T-cell (primary cell): ENCODE measurements at regions of chr1 and their contacts with region 1.

Region 1: GRCh38 chr1:111197598-111198284 is 2.7 kb downstream of the DENND2D start:
- DNase-seq: peak in 28 of 35 experiments; percentile 46 to 86 (median 64)
- ATAC-seq: peak; percentile 26 to 63 (median 60)
- H3K4me3 ChIP-seq: peak overlapping the region; percentile 78 to 90
- H3K4me3 Mint-ChIP-seq: peak overlapping the region; percentile 98 to 99 (median 99)
- H3K27ac ChIP-seq: peak overlapping the region; percentile 76
- H3K27ac Mint-ChIP-seq: peak overlapping the region; percentile 95 to 99
- H3K4me1 ChIP-seq: peaks cover 62 to 78% of the 10 kb centered on the region in 2 experiments
- H3K4me1 Mint-ChIP-seq: peaks cover 78 to 87% (median 84%) of the 10 kb centered on the region in 3 donors
- H3K27me3 ChIP-seq: no peaks in the 10 kb centered on the region
- H3K27me3 Mint-ChIP-seq: no peaks in the 10 kb centered on the region

Region 2: DNA sequence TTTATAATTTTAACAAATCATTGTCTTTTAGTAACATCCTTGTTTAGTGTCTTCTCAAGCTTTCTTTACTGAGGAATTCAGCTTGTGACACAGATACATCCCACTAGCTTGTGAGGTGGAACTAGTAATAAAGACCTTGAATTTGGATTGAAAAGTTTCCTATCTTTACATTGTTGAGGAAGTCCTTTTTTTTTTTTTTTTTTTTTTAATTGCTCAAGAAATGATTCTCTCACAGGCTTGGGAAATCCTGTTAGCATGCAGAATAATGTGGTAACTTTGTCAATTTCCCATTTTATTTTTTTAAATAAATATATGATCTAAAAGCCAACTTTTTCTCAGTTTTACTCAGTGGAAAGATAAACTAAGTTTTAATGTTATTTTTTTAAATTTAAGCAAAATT is 13.1 kb before region 1 on chr1:
- CTCF ChIA-PET with region 1: interaction called in 1 of 2 experiments, 5 read pairs
- POLR2A ChIA-PET with region 1: interaction called in 1 of 2 experiments, 11 read pairs
- DNase-seq: no peak
- ATAC-seq: no peak
- H3K4me3 ChIP-seq: no peak overlapping the region
- H3K4me3 Mint-ChIP-seq: no peak overlapping the region
- H3K27ac ChIP-seq: no peak overlapping the region
- H3K27ac Mint-ChIP-seq: peak overlapping the region; percentile 75 to 81
- H3K4me1 ChIP-seq: peaks cover 13 to 22% of the 10 kb centered on the region in 2 experiments
- H3K4me1 Mint-ChIP-seq: peaks cover 84 to 92% (median 91%) of the 10 kb centered on the region in 3 donors
- H3K27me3 ChIP-seq: no peaks in the 10 kb centered on the region
- H3K27me3 Mint-ChIP-seq: no peaks in the 10 kb centered on the region

Region 3: DNA sequence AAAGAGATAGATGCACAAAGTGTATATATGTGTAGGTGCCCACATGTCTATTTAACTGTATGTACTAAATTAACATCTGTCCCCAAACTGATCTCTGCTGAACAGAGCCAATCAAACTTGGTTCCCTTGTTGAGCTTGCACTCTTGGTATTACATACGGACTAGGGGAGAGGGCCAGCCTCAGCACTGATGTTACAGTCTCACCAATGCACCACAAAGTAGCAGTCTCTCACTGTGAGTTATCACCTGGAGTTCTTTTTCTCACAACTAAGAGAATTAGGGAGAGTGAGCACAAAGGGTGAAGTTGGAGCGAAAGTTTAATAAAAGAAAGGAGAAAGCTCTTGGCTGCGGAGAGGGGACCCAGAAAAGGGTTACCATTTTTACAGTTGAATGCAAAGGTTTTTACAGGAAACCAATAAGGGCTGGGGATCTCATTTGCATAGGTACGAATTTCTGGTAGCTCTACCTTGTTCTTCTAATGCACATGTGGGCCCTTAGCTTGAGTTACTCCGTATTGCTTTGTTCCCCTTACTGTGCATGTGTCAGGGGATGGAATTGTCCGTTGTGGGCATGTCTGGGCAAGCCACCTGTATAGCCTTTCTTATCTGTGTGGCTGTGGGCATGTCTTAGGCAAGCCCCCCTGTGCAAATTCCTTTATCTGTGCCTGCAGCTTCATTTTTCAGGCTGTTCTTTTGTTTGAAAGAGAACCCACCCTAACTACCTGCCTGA is 16.5 kb after region 1 on chr1:
- CTCF ChIA-PET with region 1: interaction called in 1 of 2 experiments, 50 read pairs
- POLR2A ChIA-PET with region 1: interaction called, 7 to 17 read pairs
- DNase-seq: peak in 1 of 35 experiments; percentile 6
- ATAC-seq: no peak
- H3K4me3 ChIP-seq: no peak overlapping the region
- H3K4me3 Mint-ChIP-seq: peak overlapping the region; percentile 62 to 81 (median 63)
- H3K27ac ChIP-seq: peak overlapping the region; percentile 87
- H3K27ac Mint-ChIP-seq: peak overlapping the region; percentile 95 to 96
- H3K4me1 ChIP-seq: peaks cover 50 to 70% of the 10 kb centered on the region in 2 experiments
- H3K4me1 Mint-ChIP-seq: peaks cover 82 to 92% (median 88%) of the 10 kb centered on the region in 3 donors
- H3K27me3 ChIP-seq: no peaks in the 10 kb centered on the region
- H3K27me3 Mint-ChIP-seq: peaks cover 0 to 2% of the 10 kb centered on the region in 2 donors

Region 4: GRCh38 chr1:111222308-111223125 is 24.8 kb after region 1 on chr1:
- CTCF ChIA-PET with region 1: interaction called, 4 to 50 read pairs
- POLR2A ChIA-PET with region 1: interaction called, 4 to 9 read pairs
- DNase-seq: peak in 34 of 35 experiments; percentile 32 to 89 (median 66)
- ATAC-seq: peak; percentile 27 to 41 (median 34)
- H3K4me3 ChIP-seq: peak overlapping the region; percentile 37 to 39
- H3K4me3 Mint-ChIP-seq: peak overlapping the region; percentile 71 to 81 (median 73)
- H3K27ac ChIP-seq: peak overlapping the region; percentile 87
- H3K27ac Mint-ChIP-seq: peak overlapping the region; percentile 95 to 96
- H3K4me1 ChIP-seq: peaks cover 88 to 89% of the 10 kb centered on the region in 2 experiments
- H3K4me1 Mint-ChIP-seq: peaks cover 94 to 100% (median 94%) of the 10 kb centered on the region in 3 donors
- H3K27me3 ChIP-seq: no peaks in the 10 kb centered on the region
- H3K27me3 Mint-ChIP-seq: no peaks in the 10 kb centered on the region

Region 5: GRCh38 chr1:111334169-111334568 is 136.4 kb after region 1 on chr1:
- CTCF ChIA-PET with region 1: interaction called, 3 to 10 read pairs
- POLR2A ChIA-PET with region 1: no interaction called
- DNase-seq: peak in 32 of 35 experiments; percentile 31 to 83 (median 53)
- ATAC-seq: peak; percentile 68 to 84 (median 81)
- H3K4me3 ChIP-seq: no peak overlapping the region
- H3K4me3 Mint-ChIP-seq: no peak overlapping the region
- H3K27ac ChIP-seq: no peak overlapping the region
- H3K27ac Mint-ChIP-seq: peak overlapping the region; percentile 5 to 52
- H3K4me1 ChIP-seq: peaks cover 0 to 6% of the 10 kb centered on the region in 2 experiments
- H3K4me1 Mint-ChIP-seq: peaks cover 8 to 12% (median 11%) of the 10 kb centered on the region in 3 donors
- H3K27me3 ChIP-seq: no peaks in the 10 kb centered on the region
- H3K27me3 Mint-ChIP-seq: no peaks in the 10 kb centered on the region

Region 6: GRCh38 chr1:111399792-111400610 is 202.3 kb after region 1 on chr1:
- CTCF ChIA-PET with region 1: interaction called in 1 of 2 experiments, 10 read pairs
- POLR2A ChIA-PET with region 1: interaction called in 1 of 2 experiments, 3 read pairs
- DNase-seq: peak in 22 of 35 experiments; percentile 6 to 70 (median 24)
- ATAC-seq: no peak
- H3K4me3 ChIP-seq: no peak overlapping the region
- H3K4me3 Mint-ChIP-seq: no peak overlapping the region
- H3K27ac ChIP-seq: no peak overlapping the region
- H3K27ac Mint-ChIP-seq: peak overlapping the region in 1 of 2 donors; percentile 5
- H3K4me1 ChIP-seq: peaks cover 0 to 12% of the 10 kb centered on the region in 2 experiments
- H3K4me1 Mint-ChIP-seq: peaks cover 19 to 44% (median 24%) of the 10 kb centered on the region in 3 donors
- H3K27me3 ChIP-seq: no peaks in the 10 kb centered on the region
- H3K27me3 Mint-ChIP-seq: no peaks in the 10 kb centered on the region